Dorsolateral prefrontal cortex (tissue), 120 donors: ENCODE measurements at regions of chr17 and their contacts with region 1.

Region 1: GRCh38 chr17:38667099-38667786 is 7.5 kb downstream of the EPOP start:
- DNase-seq: peak in 9 of 10 donors; percentile 35 to 82 (median 69)
- H3K4me3 ChIP-seq: no peak overlapping the region
- H3K27ac ChIP-seq: peak overlapping the region in 1 of 59 donors; percentile 13
- H3K27me3 ChIP-seq: no peaks in the 10 kb centered on the region
- CTCF ChIP-seq: peak; percentile 85 to 100 (median 98)

Region 2: GRCh38 chr17:38421171-38421841 is 245.9 kb before region 1 on chr17:
- intact Hi-C with region 1: loop called (anchors 5 to 10 kb)
- DNase-seq: no peak
- H3K4me3 ChIP-seq: peak overlapping the region in 46 of 59 donors; percentile 0 to 72 (median 30)
- H3K27ac ChIP-seq: peak overlapping the region in 54 of 59 donors; percentile 8 to 100 (median 70)
- H3K27me3 ChIP-seq: peaks cover 0 to 3% (median 0%) of the 10 kb centered on the region in 45 donors
- CTCF ChIP-seq: no peak

Region 3: GRCh38 chr17:38485146-38485468 is 182.1 kb before region 1 on chr17:
- intact Hi-C with region 1: loop called in 1 of 2 experiments (anchors 2 kb)
- DNase-seq: no peak
- H3K4me3 ChIP-seq: peak overlapping the region in 2 of 59 donors; percentile 3 to 8
- H3K27ac ChIP-seq: peak overlapping the region; percentile 4 to 92 (median 85)
- H3K27me3 ChIP-seq: no peaks in the 10 kb centered on the region
- CTCF ChIP-seq: peak in 18 of 56 donors; percentile 0 to 39 (median 7)

Region 4: GRCh38 chr17:38557836-38558727 is 109.2 kb before region 1 on chr17:
- intact Hi-C with region 1: loop called (anchors 1 kb)
- DNase-seq: peak; percentile 82 to 93 (median 90)
- H3K4me3 ChIP-seq: peak overlapping the region in 57 of 59 donors; percentile 14 to 61 (median 43)
- H3K27ac ChIP-seq: peak overlapping the region; percentile 37 to 99 (median 80)
- H3K27me3 ChIP-seq: peaks cover 0 to 9% (median 0%) of the 10 kb centered on the region in 45 donors
- CTCF ChIP-seq: peak; percentile 34 to 100 (median 95)

Region 5: GRCh38 chr17:38605888-38606645 is 61.2 kb before region 1 on chr17 and contains the start of gene SRCIN1:
- intact Hi-C with region 1: loop called in 1 of 2 experiments (anchors 2 kb)
- DNase-seq: peak; percentile 65 to 80 (median 75)
- H3K4me3 ChIP-seq: peak within 1 kb of the TSS; percentile 45 to 76 (median 63)
- H3K27ac ChIP-seq: peak within 1 kb of the TSS in 58 of 59 donors; percentile 48 to 94 (median 85)
- H3K27me3 ChIP-seq: peaks cover 0 to 20% (median 0%) of the 10 kb centered on the region in 45 donors
- CTCF ChIP-seq: peak; percentile 52 to 93 (median 80)
- total RNA-seq, gene SRCIN1: 80.9 to 338 (median 151) TPM

Region 6: DNA sequence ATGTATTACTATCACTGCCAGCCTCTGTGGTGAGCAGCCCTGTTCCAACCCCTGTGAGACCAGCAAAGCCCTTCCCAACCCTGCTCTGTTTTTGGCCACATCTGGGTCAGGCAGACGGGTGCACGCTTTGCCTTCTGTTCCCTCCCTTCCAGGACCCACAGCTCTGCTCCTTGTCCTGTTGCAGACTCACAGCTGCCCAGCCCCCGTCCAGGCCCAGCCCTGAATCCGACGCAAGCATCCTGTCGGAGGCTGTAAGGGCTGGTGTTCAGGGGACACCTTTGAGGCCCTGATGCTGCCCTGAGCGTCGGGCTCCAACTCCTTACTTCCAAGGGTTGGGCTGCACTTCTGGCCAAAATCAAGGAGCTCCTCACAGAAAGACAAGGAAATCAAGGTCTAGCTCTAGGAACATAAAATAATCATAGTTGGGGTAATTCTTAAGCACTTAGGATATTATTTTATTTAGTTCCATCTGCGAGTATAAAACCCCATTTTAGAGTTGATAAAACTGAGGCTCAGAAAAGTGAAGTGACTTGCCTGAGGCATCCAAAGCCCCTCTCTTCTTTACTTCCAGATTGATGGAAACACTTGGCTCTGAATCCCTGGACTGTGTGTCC is 47.2 kb before region 1 on chr17:
- intact Hi-C with region 1: no loop called
- DNase-seq: peak in 2 of 10 donors; percentile 14 to 15
- H3K4me3 ChIP-seq: no peak overlapping the region
- H3K27ac ChIP-seq: no peak overlapping the region
- H3K27me3 ChIP-seq: no peaks in the 10 kb centered on the region
- CTCF ChIP-seq: no peak